Endothelial cell of umbilical vein (primary cell): ENCODE measurements at regions of chr2 and their contacts with region 1.

Region 1: GRCh38 chr2:39059366-39059952 is 61.4 kb downstream of the SOS1 start:
- DNase-seq: peak; percentile 60
- H3K4me3 ChIP-seq: no peak overlapping the region
- H3K27ac ChIP-seq: no peak overlapping the region
- H3K4me1 ChIP-seq: no peaks in the 10 kb centered on the region
- H3K27me3 ChIP-seq: no peaks in the 10 kb centered on the region
- CTCF ChIP-seq: peak; percentile 14 to 41
- POLR2A ChIP-seq: no peak

Region 2: DNA sequence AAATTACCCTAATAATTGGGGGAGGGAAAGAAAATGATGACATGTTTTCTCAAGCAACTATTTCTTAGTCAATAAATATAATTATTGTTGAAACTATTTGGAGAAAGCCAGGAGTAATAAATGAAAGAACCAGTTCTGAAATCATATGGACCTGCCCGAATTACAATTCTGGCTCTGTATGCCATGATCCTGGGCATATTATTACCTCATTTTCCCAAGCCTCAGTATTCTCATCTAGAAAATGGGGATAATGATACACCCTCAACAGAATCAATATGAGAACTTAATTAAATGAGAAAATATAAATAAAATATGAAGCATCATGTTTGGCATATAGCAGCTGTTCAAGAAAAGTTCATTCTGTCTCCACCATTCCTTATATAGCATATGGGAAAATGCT is 146.8 kb before region 1 on chr2:
- CTCF ChIA-PET with region 1: no interaction called
- POLR2A ChIA-PET with region 1: no interaction called
- dilution Hi-C with region 1: no loop called
- intact Hi-C with region 1: no loop called
- DNase-seq: no peak
- H3K4me3 ChIP-seq: no peak overlapping the region
- H3K27ac ChIP-seq: no peak overlapping the region
- H3K4me1 ChIP-seq: no peaks in the 10 kb centered on the region
- H3K27me3 ChIP-seq: no peaks in the 10 kb centered on the region
- CTCF ChIP-seq: no peak
- POLR2A ChIP-seq: no peak

Region 3: DNA sequence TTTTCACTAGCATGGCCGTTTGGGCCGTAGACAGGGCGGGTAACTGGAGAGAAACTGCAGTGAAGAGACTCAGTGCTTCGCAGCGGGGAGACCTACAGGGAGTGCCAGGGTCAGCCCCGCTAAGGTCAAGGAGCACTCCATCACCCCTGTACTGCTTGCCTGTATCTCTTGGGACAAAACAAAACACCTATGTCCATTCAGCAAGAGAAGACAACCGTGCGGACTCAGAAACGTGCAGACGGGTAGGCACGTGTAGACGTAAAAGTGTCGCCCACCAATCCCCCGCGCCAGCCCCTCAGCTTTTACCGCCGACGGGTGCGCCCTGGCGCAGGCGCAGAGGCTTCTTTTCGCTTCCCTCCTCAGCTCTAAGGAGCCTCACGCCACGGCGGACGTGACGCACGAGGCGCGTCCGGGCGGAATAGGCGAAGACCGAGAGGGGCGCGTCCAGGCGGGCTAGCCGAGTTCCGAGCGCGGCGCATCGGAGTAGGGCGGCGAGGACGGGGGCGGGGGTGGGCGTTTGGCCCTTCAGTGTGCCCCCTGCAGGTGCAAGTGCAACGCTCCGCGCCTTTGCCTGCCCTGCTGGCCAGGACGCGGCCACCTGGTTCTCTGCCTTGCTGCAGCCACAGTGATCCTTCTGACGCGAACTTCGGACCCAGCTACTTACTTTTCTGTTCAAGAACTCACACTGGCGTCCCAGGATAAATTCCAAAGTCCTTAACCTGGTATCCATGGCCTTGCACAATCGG is 64.7 kb after region 1 on chr2:
- CTCF ChIA-PET with region 1: interaction called, 22 read pairs
- POLR2A ChIA-PET with region 1: no interaction called
- dilution Hi-C with region 1: no loop called
- intact Hi-C with region 1: loop called (anchors 2 kb)
- DNase-seq: peak; percentile 97
- H3K4me3 ChIP-seq: peak overlapping the region; percentile 53 to 96 (median 89)
- H3K27ac ChIP-seq: peak overlapping the region; percentile 45
- H3K4me1 ChIP-seq: peaks cover 18% of the 10 kb centered on the region
- H3K27me3 ChIP-seq: no peaks in the 10 kb centered on the region
- CTCF ChIP-seq: peak; percentile 28 to 86
- POLR2A ChIP-seq: peak; percentile 96